Caco-2 (cell line): ENCODE measurements at regions of chr2 and their contacts with region 1.

Region 1: DNA sequence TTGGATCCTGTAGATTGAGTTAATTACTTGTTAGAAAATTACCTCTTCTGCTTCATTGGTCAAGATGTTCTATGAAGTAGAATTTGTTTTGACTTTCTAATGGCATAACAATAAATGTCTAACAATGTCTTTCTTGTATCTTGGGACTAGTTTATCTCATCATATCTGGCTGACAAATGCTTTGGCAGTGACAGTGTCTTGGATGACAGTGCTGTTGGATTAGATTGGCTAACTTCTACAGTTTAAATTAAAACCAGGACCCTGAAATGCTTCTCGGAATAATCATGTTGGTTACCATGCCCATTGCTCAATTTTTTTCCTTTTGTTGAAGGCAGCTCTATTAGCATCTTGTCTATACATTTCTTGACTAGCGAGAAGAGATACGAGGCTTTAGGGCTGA is 176.9 kb downstream of the PARD3B start:
- DNase-seq: no peak
- H3K4me3 ChIP-seq: no peak overlapping the region
- H3K4me3 Mint-ChIP-seq: no peak overlapping the region
- H3K27ac Mint-ChIP-seq: no peak overlapping the region
- H3K4me1 ChIP-seq: peaks cover 14% of the 10 kb centered on the region
- H3K4me1 Mint-ChIP-seq: peaks cover 18% of the 10 kb centered on the region
- H3K27me3 ChIP-seq: no peaks in the 10 kb centered on the region
- H3K27me3 Mint-ChIP-seq: no peaks in the 10 kb centered on the region
- CTCF ChIP-seq: no peak

Region 2: GRCh38 chr2:204842661-204843485 is 120.7 kb after region 1 on chr2:
- CTCF ChIA-PET with region 1: no interaction called
- POLR2A ChIA-PET with region 1: no interaction called
- intact Hi-C with region 1: loop called (anchors 10 kb)
- DNase-seq: no peak
- H3K4me3 ChIP-seq: no peak overlapping the region
- H3K4me3 Mint-ChIP-seq: no peak overlapping the region
- H3K27ac Mint-ChIP-seq: no peak overlapping the region
- H3K4me1 ChIP-seq: peaks cover 8% of the 10 kb centered on the region; the same call in 1 of the 2 replicates
- H3K4me1 Mint-ChIP-seq: peaks cover 28% of the 10 kb centered on the region
- H3K27me3 ChIP-seq: no peaks in the 10 kb centered on the region
- H3K27me3 Mint-ChIP-seq: no peaks in the 10 kb centered on the region
- CTCF ChIP-seq: no peak